ENCODE measurements at regions of chr3 and their contacts with region 1.

Region 1: DNA sequence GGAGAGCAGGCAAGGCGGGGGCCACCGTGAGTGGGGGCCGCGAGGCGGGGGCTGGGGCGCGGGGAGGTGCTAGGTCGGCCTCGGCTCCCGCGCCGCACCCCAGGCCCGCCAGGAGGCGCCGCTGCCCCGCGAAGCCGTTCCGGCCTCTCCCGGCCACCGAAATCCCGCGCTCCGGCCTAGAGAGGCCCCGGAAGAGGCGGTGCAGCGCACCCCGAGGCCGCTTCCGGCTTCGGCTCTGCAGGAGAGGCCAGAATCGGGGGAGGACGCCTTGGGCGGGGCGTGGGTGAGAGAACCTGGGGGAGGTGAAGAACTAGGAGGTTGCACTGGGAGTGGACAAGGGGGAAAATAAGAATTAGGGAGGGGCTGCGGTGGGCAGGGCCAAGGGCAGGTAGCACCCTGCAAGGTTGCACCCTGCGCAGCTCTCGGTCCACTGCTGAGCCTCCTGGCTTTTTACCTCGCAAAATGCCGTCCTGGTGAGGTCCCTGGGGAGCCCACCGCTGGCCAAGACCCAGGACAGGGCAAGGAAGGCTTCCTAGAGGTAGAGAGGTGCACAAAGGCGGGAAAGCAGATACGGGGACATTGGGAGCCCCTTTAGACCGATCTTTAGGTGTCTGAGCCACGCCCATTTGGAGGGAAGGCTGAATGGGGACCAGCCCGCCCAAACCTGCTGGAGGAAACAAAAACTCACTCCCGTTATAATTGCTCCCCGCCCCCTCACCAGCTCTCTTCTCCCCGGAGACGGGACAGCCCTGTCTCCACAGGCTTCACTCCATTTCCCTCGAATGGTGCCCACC is 8.4 kb upstream of the GNAI2 start:
- DNase-seq: peak; percentile 80
- ATAC-seq: peak; percentile 90
- H3K4me3 ChIP-seq: peak overlapping the region; percentile 82
- H3K27ac ChIP-seq: peak overlapping the region; percentile 81
- H3K4me1 ChIP-seq: peaks cover 7% of the 10 kb centered on the region
- H3K27me3 ChIP-seq: peaks cover 3% of the 10 kb centered on the region; the same call in 1 of the 2 replicates
- CTCF ChIP-seq: peak; percentile 91
- POLR2A ChIP-seq: peak; percentile 47; the same call in 1 of the 2 replicates
- RAD21 ChIP-seq: peak; percentile 94

Region 2: GRCh38 chr3:50150808-50151686 is 76.5 kb before region 1 on chr3:
- CTCF ChIA-PET with region 1: no interaction called
- POLR2A ChIA-PET with region 1: no interaction called
- dilution Hi-C with region 1: no loop called
- in situ Hi-C with region 1: no loop called
- intact Hi-C with region 1: no loop called
- DNase-seq: no peak
- ATAC-seq: no peak
- H3K4me3 ChIP-seq: no peak overlapping the region
- H3K27ac ChIP-seq: no peak overlapping the region
- H3K4me1 ChIP-seq: peaks cover 11% of the 10 kb centered on the region
- H3K27me3 ChIP-seq: peaks cover 7% of the 10 kb centered on the region; the same call in 1 of the 2 replicates
- CTCF ChIP-seq: no peak
- POLR2A ChIP-seq: no peak
- RAD21 ChIP-seq: no peak

Region 3: GRCh38 chr3:50163572-50164455 is 63.8 kb before region 1 on chr3:
- CTCF ChIA-PET with region 1: no interaction called
- POLR2A ChIA-PET with region 1: no interaction called
- dilution Hi-C with region 1: no loop called
- in situ Hi-C with region 1: no loop called
- intact Hi-C with region 1: loop called (anchors 2 kb)
- DNase-seq: peak; percentile 93
- ATAC-seq: peak; percentile 63
- H3K4me3 ChIP-seq: no peak overlapping the region
- H3K27ac ChIP-seq: peak overlapping the region; percentile 30
- H3K4me1 ChIP-seq: peaks cover 54% of the 10 kb centered on the region
- H3K27me3 ChIP-seq: no peaks in the 10 kb centered on the region
- CTCF ChIP-seq: no peak
- POLR2A ChIP-seq: no peak
- RAD21 ChIP-seq: no peak

Region 4: GRCh38 chr3:50245831-50246516 is 18.4 kb after region 1 on chr3:
- CTCF ChIA-PET with region 1: interaction called, 6 read pairs
- POLR2A ChIA-PET with region 1: no interaction called
- dilution Hi-C with region 1: no loop called
- in situ Hi-C with region 1: no loop called
- intact Hi-C with region 1: loop called (anchors 1 kb)
- DNase-seq: peak; percentile 78
- ATAC-seq: peak; percentile 90
- H3K4me3 ChIP-seq: peak overlapping the region; percentile 19
- H3K27ac ChIP-seq: peak overlapping the region; percentile 86
- H3K4me1 ChIP-seq: peaks cover 68% of the 10 kb centered on the region
- H3K27me3 ChIP-seq: no peaks in the 10 kb centered on the region
- CTCF ChIP-seq: peak; percentile 97
- POLR2A ChIP-seq: no peak
- RAD21 ChIP-seq: peak; percentile 75

Region 5: DNA sequence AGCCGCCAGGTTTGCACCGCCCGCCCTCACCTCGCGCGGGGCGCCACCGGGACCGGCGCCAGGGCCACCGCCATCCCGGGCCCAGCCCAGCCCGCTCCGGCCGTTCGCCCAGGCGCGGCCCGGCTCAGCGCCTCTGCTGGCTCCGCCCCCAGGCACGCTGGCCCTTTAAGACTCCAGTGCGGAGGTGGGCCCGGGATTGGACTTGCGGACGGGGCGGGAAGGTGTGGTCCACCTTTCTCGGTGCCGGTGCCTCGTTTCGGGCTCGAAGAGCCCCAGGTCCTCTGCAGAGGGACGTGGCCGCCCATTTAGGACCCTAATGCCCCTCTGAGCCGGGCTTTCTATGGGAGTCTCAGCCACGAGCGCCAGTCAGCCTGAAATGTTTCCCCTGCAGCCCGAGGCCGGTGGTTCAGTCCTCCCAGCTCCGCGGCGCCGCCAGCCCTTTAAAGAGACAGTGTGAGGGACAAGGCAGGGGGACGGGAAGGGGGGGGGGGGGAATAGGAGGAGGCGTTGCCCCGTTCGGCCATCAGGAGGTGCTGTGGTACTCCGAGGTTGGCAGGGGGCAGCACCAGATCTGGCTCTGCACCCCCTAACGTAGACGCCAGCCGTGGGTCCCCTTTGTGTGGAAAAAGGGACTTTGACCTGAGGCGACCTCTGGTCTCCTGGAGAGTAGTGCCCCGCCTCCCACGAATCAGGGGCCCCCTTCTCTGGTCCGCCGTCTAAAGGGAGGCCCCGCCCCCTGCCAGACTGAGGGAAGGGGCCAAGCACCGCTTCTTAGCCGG is 93.9 kb after region 1 on chr3:
- CTCF ChIA-PET with region 1: no interaction called
- POLR2A ChIA-PET with region 1: no interaction called
- dilution Hi-C with region 1: no loop called
- in situ Hi-C with region 1: no loop called
- intact Hi-C with region 1: loop called (anchors 1 kb)
- DNase-seq: peak; percentile 83
- ATAC-seq: peak; percentile 90
- H3K4me3 ChIP-seq: peak overlapping the region; percentile 58
- H3K27ac ChIP-seq: peak overlapping the region; percentile 98
- H3K4me1 ChIP-seq: peaks cover 25% of the 10 kb centered on the region
- H3K27me3 ChIP-seq: no peaks in the 10 kb centered on the region
- CTCF ChIP-seq: peak; percentile 42
- POLR2A ChIP-seq: peak; percentile 80
- RAD21 ChIP-seq: no peak

Measured in IMR-90 (cell line).